Psoas muscle (tissue), 8 donors: ENCODE measurements at regions of chr7 and their contacts with region 1.

Region 1: GRCh38 chr7:45244981-45245380 is 87.4 kb downstream of the RAMP3 start:
- DNase-seq: no peak
- ATAC-seq: no peak
- H3K4me3 ChIP-seq: no peak overlapping the region
- H3K27ac ChIP-seq: no peak overlapping the region
- H3K4me1 ChIP-seq: no peaks in the 10 kb centered on the region
- H3K27me3 ChIP-seq: peaks cover 0 to 11% (median 0%) of the 10 kb centered on the region in 3 donors
- CTCF ChIP-seq: no peak

Region 2: DNA sequence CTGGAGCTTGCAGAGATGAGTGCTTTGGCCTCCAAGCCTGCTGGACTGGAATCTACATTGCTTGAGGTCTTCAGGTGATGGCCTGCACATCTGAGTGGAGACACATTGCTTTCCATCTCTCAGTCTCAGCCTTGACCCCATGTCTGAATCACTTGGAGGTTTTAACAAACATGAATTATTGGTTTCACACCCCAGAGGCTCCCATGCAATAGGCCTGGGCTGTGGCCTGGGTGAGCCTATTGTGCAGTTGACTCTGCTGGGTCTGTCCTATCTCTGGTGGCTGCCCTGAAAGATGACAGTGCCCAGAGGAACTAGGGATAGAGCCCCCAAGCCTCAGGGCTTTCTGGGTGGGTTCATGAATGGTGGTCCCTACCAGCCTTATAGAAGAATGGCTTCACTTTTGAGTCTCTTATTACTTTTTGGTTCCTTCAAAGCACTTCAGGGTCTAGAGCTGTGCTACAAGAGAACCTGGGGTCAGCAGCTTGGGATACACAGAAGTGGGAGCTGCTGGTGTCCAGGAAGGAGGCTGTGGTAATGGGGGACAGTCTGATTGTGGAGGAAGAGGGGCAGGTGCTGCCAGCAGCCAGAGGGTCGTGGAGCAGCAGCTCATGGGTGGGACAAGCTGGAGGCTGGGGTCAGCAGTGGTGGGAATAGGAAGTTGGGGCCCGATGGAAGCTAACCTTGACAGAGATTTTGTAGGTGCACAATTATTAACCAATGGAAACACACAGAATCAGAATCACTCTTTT is 81.9 kb before region 1 on chr7:
- intact Hi-C with region 1: no loop called
- DNase-seq: peak in 1 of 2 donors; percentile 4
- ATAC-seq: no peak
- H3K4me3 ChIP-seq: no peak overlapping the region
- H3K27ac ChIP-seq: no peak overlapping the region
- H3K4me1 ChIP-seq: no peaks in the 10 kb centered on the region
- H3K27me3 ChIP-seq: peaks cover 0 to 9% (median 2%) of the 10 kb centered on the region in 3 donors
- CTCF ChIP-seq: no peak

Region 3: GRCh38 chr7:45267266-45267665 is 22.3 kb after region 1 on chr7:
- intact Hi-C with region 1: loop called in 1 of 2 experiments (anchors 2 kb)
- DNase-seq: no peak
- ATAC-seq: no peak
- H3K4me3 ChIP-seq: no peak overlapping the region
- H3K27ac ChIP-seq: no peak overlapping the region
- H3K4me1 ChIP-seq: no peaks in the 10 kb centered on the region
- H3K27me3 ChIP-seq: no peaks in the 10 kb centered on the region
- CTCF ChIP-seq: no peak